Calu3 (cell line): ENCODE measurements at regions of chr1 and their contacts with region 1.

Region 1: GRCh38 chr1:205141236-205142101 is 19.7 kb upstream of the RBBP5 start:
- DNase-seq: peak; percentile 78
- H3K4me3 Mint-ChIP-seq: peak overlapping the region; percentile 25
- H3K27ac Mint-ChIP-seq: no peak overlapping the region
- H3K4me1 Mint-ChIP-seq: no peaks in the 10 kb centered on the region
- H3K27me3 Mint-ChIP-seq: no peaks in the 10 kb centered on the region
- CTCF ChIP-seq: peak; percentile 67

Region 2: DNA sequence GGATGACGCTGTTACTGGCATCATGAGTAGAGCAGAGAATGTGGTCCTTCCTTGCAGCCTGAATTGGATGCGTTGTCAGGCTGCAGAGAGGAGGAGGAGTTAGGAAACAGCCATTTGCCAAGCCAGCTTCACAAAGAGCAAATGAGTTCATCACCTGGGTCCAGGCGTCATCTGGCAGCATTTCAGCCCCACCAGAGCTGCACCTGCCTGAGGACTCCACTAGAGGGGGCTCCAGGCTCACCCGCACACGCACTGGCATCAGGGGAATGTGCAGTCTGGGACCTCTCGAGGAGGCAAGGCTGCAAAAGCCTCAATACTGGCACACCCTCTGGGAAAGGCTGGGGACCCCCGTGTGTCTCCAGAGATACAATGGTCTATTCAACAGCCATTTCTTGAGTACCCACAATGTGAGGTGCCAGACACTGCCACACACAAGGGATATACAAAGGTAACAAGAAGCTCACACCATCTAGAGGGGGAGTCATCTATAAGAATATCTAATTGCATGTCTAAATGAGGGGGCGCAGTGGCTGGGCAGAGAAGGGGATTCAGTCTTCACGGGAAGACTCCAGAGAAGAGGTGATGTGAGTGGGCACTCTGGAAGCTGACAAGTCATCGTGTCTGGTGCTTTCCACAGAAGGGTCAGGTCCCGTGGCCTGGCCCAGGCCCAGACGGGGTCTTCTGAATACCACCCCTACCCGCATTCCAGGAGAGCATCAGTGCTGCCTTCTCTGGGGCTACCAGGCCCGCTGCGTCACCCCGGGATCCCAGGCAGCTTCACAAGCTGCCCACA is 152.0 kb before region 1 on chr1:
- CTCF ChIA-PET with region 1: interaction called, 14 read pairs
- intact Hi-C with region 1: loop called (anchors 1 kb)
- DNase-seq: peak; percentile 79
- H3K4me3 Mint-ChIP-seq: no peak overlapping the region
- H3K27ac Mint-ChIP-seq: no peak overlapping the region
- H3K4me1 Mint-ChIP-seq: no peaks in the 10 kb centered on the region
- H3K27me3 Mint-ChIP-seq: peaks cover 100% of the 10 kb centered on the region
- CTCF ChIP-seq: peak; percentile 79

Region 3: GRCh38 chr1:205032508-205032907 is 109.0 kb before region 1 on chr1:
- CTCF ChIA-PET with region 1: no interaction called
- intact Hi-C with region 1: no loop called
- DNase-seq: no peak
- H3K4me3 Mint-ChIP-seq: no peak overlapping the region
- H3K27ac Mint-ChIP-seq: no peak overlapping the region
- H3K4me1 Mint-ChIP-seq: no peaks in the 10 kb centered on the region
- H3K27me3 Mint-ChIP-seq: peaks cover 99% of the 10 kb centered on the region
- CTCF ChIP-seq: no peak

Region 4: GRCh38 chr1:205121660-205122488 is 19.6 kb before region 1 on chr1 and contains the start of gene RBBP5:
- CTCF ChIA-PET with region 1: interaction called, 12 read pairs
- intact Hi-C with region 1: no loop called
- DNase-seq: peak; percentile 98
- H3K4me3 Mint-ChIP-seq: peak within 1 kb of the TSS; percentile 93
- H3K27ac Mint-ChIP-seq: peak within 1 kb of the TSS; percentile 94
- H3K4me1 Mint-ChIP-seq: peaks cover 34% of the 10 kb centered on the region
- H3K27me3 Mint-ChIP-seq: no peaks in the 10 kb centered on the region
- CTCF ChIP-seq: peak; percentile 69
- total RNA-seq, gene RBBP5: 21.9 and 22.0 TPM in 2 replicates